HCT116 (cell line): ENCODE measurements at regions of chr7 and their contacts with region 1.

Region 1: GRCh38 chr7:95511716-95512260 is 26.0 kb downstream of the ASB4 start:
- DNase-seq: peak; percentile 63
- ATAC-seq: peak; percentile 93
- H3K4me3 ChIP-seq: no peak overlapping the region
- H3K27ac ChIP-seq: no peak overlapping the region
- H3K4me1 ChIP-seq: peaks cover 0 to 4% of the 10 kb centered on the region in 2 experiments; a peak in 2 of 4 replicates
- H3K27me3 ChIP-seq: peaks cover 4% of the 10 kb centered on the region; the same call in 1 of the 2 replicates
- CTCF ChIP-seq: peak; percentile 70 to 87 (median 83)
- POLR2A ChIP-seq: no peak
- RAD21 ChIP-seq: peak; percentile 73

Region 2: DNA sequence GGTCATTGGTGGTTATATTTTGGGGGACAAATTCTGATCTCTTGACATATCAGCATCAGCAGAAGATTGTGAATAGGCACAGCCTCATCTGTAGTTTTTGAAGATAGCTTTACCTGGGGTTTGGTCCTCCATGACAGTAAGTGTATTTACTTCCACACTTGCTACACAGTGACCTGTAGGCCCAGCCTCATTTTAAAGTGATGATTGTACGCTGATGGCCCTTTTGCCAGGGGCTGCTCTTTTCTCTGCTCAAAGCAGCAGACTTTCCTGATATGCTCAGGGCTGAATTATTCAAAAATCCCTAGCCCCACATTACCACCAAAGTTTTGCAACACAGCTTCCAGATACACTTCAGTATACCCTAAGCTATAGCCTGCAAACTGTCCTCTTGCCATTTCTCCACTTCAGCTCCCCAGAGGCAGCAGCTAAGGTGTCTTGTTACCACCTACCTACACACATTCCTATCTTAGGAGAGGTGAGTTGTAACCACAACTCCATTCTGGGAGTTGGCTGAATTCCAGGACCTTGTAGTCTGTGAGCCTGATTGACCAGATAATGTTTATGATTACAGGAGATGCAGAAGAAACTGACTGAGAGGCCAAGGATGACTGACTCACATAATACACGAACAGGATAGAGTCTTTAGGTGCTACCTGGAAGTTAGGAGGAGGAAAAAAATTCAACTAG is 20.0 kb before region 1 on chr7:
- CTCF ChIA-PET with region 1: interaction called, 17 read pairs
- POLR2A ChIA-PET with region 1: interaction called, 3 read pairs
- RAD21 ChIA-PET with region 1: no interaction called
- intact Hi-C with region 1: no loop called
- DNase-seq: peak; percentile 94
- ATAC-seq: peak; percentile 95
- H3K4me3 ChIP-seq: peak overlapping the region in 1 of 2 experiments; percentile 27; a peak in 3 of 4 replicates
- H3K27ac ChIP-seq: peak overlapping the region; percentile 15; the same call in 1 of the 2 replicates
- H3K4me1 ChIP-seq: peaks cover 20 to 30% of the 10 kb centered on the region in 2 experiments
- H3K27me3 ChIP-seq: no peaks in the 10 kb centered on the region
- CTCF ChIP-seq: no peak
- POLR2A ChIP-seq: no peak
- RAD21 ChIP-seq: no peak

Region 3: DNA sequence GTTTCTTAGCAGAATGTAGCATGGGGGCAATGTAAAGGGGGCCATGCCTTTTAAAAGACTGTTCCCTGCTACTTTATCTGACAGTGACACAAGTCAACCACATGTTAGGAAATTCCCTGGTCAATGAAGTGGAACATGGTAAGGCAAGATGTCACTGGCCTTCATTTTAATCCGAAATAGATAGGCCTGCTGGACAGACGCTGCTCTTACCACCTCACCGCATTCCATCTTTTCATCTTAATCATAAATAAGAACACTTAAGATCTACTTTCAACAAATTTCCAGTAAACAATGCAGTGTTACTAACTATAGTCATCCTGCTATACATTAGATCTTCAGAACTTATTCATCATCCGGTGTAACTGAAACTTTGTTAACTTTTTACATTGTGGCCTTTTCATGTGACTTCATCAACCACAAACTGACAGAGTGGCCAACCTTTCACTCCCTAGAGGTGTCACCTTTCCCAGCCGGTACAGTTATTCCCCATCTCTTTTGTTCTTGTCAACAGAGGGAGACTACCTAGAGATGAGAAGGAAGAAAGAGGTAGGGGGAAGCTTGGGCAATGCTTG is 10.4 kb before region 1 on chr7:
- CTCF ChIA-PET with region 1: interaction called, 13 read pairs
- POLR2A ChIA-PET with region 1: no interaction called
- RAD21 ChIA-PET with region 1: no interaction called
- intact Hi-C with region 1: no loop called
- DNase-seq: no peak
- ATAC-seq: 0 out of 2 replicates have a peak, but pooled peaks have one; percentile 18
- H3K4me3 ChIP-seq: no peak overlapping the region
- H3K27ac ChIP-seq: no peak overlapping the region
- H3K4me1 ChIP-seq: peaks cover 24 to 27% of the 10 kb centered on the region in 2 experiments; a peak in 3 of 4 replicates
- H3K27me3 ChIP-seq: no peaks in the 10 kb centered on the region
- CTCF ChIP-seq: no peak
- POLR2A ChIP-seq: no peak
- RAD21 ChIP-seq: no peak

Region 4: GRCh38 chr7:95527033-95527775 is 15.4 kb after region 1 on chr7:
- CTCF ChIA-PET with region 1: interaction called, 16 read pairs
- POLR2A ChIA-PET with region 1: no interaction called
- RAD21 ChIA-PET with region 1: no interaction called
- intact Hi-C with region 1: no loop called
- DNase-seq: peak; percentile 50
- ATAC-seq: peak; percentile 95
- H3K4me3 ChIP-seq: no peak overlapping the region
- H3K27ac ChIP-seq: no peak overlapping the region
- H3K4me1 ChIP-seq: no peaks in the 10 kb centered on the region; a peak in 1 of 4 replicates
- H3K27me3 ChIP-seq: no peaks in the 10 kb centered on the region
- CTCF ChIP-seq: peak; percentile 90 to 95 (median 94)
- POLR2A ChIP-seq: no peak
- RAD21 ChIP-seq: peak; percentile 97

Region 5: GRCh38 chr7:95684037-95684436 is 172.2 kb after region 1 on chr7:
- CTCF ChIA-PET with region 1: interaction called, 116 read pairs
- POLR2A ChIA-PET with region 1: interaction called, 4 read pairs
- RAD21 ChIA-PET with region 1: interaction called, 8 to 11 read pairs
- intact Hi-C with region 1: loop called (anchors 1 kb)
- DNase-seq: peak; percentile 44
- ATAC-seq: peak; percentile 74
- H3K4me3 ChIP-seq: no peak overlapping the region
- H3K27ac ChIP-seq: no peak overlapping the region
- H3K4me1 ChIP-seq: peaks cover 0 to 5% of the 10 kb centered on the region in 2 experiments; a peak in 1 of 4 replicates
- H3K27me3 ChIP-seq: no peaks in the 10 kb centered on the region
- CTCF ChIP-seq: peak; percentile 50 to 82 (median 57); a peak in 5 of 6 replicates
- POLR2A ChIP-seq: no peak
- RAD21 ChIP-seq: peak; percentile 86